Heart left ventricle (tissue), 16 donors: ENCODE measurements at regions of chr13 and their contacts with region 1.

Region 1: GRCh38 chr13:108322206-108322824 is 52.8 kb downstream of the TNFSF13B start:
- DNase-seq: no peak
- ATAC-seq: peak in 3 of 4 donors; percentile 69 to 76 (median 72)
- H3K4me3 ChIP-seq: no peak overlapping the region
- H3K27ac ChIP-seq: no peak overlapping the region
- H3K4me1 ChIP-seq: peaks cover 0 to 19% (median 0%) of the 10 kb centered on the region in 12 donors
- H3K27me3 ChIP-seq: peaks cover 0 to 4% (median 0%) of the 10 kb centered on the region in 9 donors
- CTCF ChIP-seq: peak; percentile 64 to 85 (median 77)
- POLR2A ChIP-seq: no peak

Region 2: GRCh38 chr13:108508263-108508662 is 185.9 kb after region 1 on chr13:
- intact Hi-C with region 1: loop called in 3 of 10 experiments (anchors 10 kb)
- DNase-seq: no peak
- ATAC-seq: no peak
- H3K4me3 ChIP-seq: no peak overlapping the region
- H3K27ac ChIP-seq: no peak overlapping the region
- H3K4me1 ChIP-seq: no peaks in the 10 kb centered on the region
- H3K27me3 ChIP-seq: no peaks in the 10 kb centered on the region
- CTCF ChIP-seq: peak in 10 of 12 donors; percentile 13 to 48 (median 26)
- POLR2A ChIP-seq: no peak

Region 3: DNA sequence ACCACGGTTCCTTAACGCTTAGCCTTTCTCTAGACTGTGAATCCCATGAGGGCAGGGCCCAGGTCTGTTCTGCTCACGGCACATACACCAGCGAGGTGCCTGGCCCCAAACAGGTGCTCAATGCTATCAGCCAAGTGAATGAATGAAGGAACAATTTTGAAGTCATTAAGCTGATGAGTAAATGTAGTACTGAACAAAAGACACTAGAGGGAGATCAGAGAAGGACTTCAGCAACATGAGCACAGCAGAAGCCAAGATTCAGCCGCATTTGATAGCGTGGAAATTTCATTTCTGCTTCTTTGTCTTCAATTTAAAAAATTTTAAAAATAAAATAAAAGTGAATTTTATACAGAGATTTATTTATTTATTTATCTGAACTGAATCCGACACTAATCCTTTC is 287.0 kb after region 1 on chr13:
- intact Hi-C with region 1: loop called in 1 of 10 experiments (anchors 10 kb)
- DNase-seq: no peak
- ATAC-seq: peak in 1 of 4 donors; percentile 38
- H3K4me3 ChIP-seq: no peak overlapping the region
- H3K27ac ChIP-seq: no peak overlapping the region
- H3K4me1 ChIP-seq: peaks cover 0 to 9% (median 0%) of the 10 kb centered on the region in 12 donors
- H3K27me3 ChIP-seq: no peaks in the 10 kb centered on the region
- CTCF ChIP-seq: peak; percentile 25 to 64 (median 54)
- POLR2A ChIP-seq: no peak